Sigmoid colon (tissue), 7 donors: ENCODE measurements at regions of chr13 and their contacts with region 1.

Region 1: GRCh38 chr13:27449936-27450828 is at the start of gene MTIF3:
- DNase-seq: peak; percentile 96
- H3K4me3 ChIP-seq: peak within 1 kb of the TSS; percentile 68 to 98 (median 90)
- H3K27ac ChIP-seq: peak within 1 kb of the TSS; percentile 95 to 100 (median 98)
- H3K4me1 ChIP-seq: peaks cover 0 to 45% (median 28%) of the 10 kb centered on the region in 4 donors
- H3K27me3 ChIP-seq: no peaks in the 10 kb centered on the region
- CTCF ChIP-seq: peak in 1 of 4 experiments; percentile 32
- EP300 ChIP-seq: peak in 1 of 4 donors; percentile 16
- POLR2A ChIP-seq: peak; percentile 78 to 84
- total RNA-seq, gene MTIF3: 64.3 to 102 (median 74.4) TPM

Region 2: GRCh38 chr13:27620377-27621115 is 170.4 kb after region 1 on chr13 and contains the start of gene LNX2:
- intact Hi-C with region 1: loop called (anchors 5 kb)
- DNase-seq: peak; percentile 99
- H3K4me3 ChIP-seq: peak within 1 kb of the TSS; percentile 85 to 95 (median 92)
- H3K27ac ChIP-seq: peak within 1 kb of the TSS; percentile 91 to 98 (median 96)
- H3K4me1 ChIP-seq: peaks cover 0 to 38% (median 27%) of the 10 kb centered on the region in 4 donors
- H3K27me3 ChIP-seq: no peaks in the 10 kb centered on the region
- CTCF ChIP-seq: no peak
- EP300 ChIP-seq: no peak
- POLR2A ChIP-seq: peak; percentile 63 to 77
- total RNA-seq, gene LNX2: 7.7 to 13.9 (median 10.6) TPM

Region 3: DNA sequence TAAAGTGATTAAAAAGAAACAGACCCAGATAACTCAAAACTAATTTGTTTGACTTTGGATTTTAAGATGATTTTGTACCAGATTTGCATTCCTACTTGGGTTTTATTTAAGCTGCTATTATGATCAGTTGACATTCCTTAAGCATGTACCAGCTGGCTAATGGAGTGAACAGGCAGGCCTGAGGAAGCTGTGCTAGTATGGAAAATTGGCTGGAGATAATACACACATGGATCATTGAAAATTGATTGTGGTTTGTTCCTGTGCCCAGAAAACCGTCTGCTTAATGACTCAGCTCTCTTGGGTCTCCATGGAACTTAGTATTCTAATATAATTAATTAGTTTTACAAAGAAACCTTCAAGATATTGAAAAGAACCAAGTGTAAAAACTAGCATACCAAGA is 194.1 kb after region 1 on chr13:
- intact Hi-C with region 1: loop called (anchors 5 kb)
- DNase-seq: no peak
- H3K4me3 ChIP-seq: no peak overlapping the region
- H3K27ac ChIP-seq: peak overlapping the region; percentile 53 to 76 (median 60)
- H3K4me1 ChIP-seq: peaks cover 0 to 74% (median 50%) of the 10 kb centered on the region in 4 donors
- H3K27me3 ChIP-seq: no peaks in the 10 kb centered on the region
- CTCF ChIP-seq: no peak
- EP300 ChIP-seq: no peak
- POLR2A ChIP-seq: no peak

Region 4: GRCh38 chr13:27889471-27889870 is 439.3 kb after region 1 on chr13:
- intact Hi-C with region 1: no loop called
- DNase-seq: no peak
- H3K4me3 ChIP-seq: no peak overlapping the region
- H3K27ac ChIP-seq: no peak overlapping the region
- H3K4me1 ChIP-seq: no peaks in the 10 kb centered on the region
- H3K27me3 ChIP-seq: peaks cover 0 to 12% (median 0%) of the 10 kb centered on the region in 3 donors
- CTCF ChIP-seq: no peak
- EP300 ChIP-seq: no peak
- POLR2A ChIP-seq: no peak